ENCODE measurements at regions of chr18 and their contacts with region 1.

Region 1: DNA sequence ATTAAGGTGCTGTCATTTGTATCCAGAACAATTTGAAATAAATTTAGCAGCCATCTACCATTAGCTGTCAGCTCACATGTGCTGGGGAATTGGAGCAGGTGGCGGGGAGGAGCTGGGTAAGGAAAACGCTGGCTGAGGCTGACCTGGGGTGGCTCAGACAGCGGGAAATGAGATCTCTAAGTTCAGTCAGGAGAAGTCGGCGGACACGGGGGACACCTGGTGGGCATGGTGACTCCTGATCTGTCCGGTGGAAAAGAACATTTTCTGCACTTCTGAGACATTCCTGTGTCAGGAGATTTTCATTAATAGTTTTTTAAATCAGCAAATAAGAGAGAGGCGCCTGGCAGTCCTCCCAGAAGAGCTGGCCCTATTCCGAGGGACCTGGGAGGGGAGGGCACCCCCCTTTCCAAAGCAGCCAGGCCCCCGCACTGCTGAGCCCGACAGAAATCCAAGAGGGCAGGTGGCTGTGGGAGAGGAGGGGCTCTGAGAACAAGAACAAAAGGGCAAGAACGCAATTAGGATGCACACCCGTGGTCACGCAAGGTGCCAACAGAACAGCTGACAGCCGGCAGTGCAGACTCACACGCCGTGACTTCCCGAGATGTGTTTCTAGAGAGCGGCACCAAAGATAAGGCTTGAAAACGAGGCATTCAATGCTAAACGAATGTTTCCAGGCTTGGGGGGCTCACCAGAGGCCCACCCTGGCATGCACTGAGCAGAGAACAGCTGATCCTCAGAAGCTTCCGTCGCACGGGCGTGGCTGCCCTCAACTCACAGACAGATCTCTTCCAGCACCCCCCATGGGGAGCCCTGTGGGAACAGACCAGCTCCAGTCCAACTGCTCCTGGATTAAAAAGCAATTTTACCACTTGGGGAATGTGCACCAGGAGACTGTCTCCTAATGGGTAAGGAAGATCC is 26.4 kb downstream of the SLC66A2 start:
- DNase-seq: no peak
- ATAC-seq: peak; percentile 65 to 71

Region 2: GRCh38 chr18:79975985-79976680 is 51.1 kb after region 1 on chr18:
- intact Hi-C with region 1: loop called in 1 of 2 experiments (anchors 5 kb)
- DNase-seq: no peak
- ATAC-seq: peak in 1 of 2 donors; percentile 72

Region 3: DNA sequence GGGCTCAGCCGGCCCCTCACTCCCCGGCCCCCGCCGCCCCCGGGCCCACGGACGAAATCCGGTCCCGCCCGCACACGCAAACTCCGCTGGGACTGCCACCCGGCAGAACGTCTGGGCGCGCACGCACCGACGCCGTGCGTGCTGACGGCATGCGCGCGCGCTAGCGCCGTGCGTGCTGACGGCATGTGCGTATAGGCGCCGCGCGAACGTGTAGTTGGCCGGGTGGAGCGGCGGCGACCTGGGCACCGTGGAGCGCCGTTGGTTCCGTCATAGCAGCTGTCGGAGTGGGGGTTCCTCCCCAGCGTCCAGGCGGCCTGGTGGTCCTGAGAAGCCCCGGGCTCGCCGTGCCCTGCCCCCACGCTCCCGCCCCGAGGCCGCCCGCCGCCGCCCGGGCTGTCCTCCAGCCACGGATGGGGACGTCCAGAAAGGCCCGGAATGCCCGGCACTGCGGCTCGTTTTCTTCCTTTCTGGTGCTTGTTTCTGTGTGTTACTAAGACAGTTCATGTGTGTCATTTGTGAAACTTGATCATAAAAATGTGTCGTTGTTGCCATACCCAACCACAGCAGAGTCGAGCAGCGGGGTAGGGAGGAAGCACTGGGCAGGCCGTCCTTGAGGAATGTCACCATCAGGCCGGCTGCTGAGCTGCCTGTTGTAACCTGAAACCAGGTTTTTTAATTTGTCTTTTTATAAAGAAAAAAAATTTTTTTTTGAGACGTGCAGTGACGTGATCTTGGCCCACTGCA is 63.5 kb after region 1 on chr18 and contains the start of gene TXNL4A:
- intact Hi-C with region 1: no loop called
- DNase-seq: peak; percentile 92
- ATAC-seq: peak; percentile 99
- total RNA-seq, gene TXNL4A: 92.0 to 114 TPM

Measured in left cardiac atrium (tissue), 4 donors.